ENCODE measurements at regions of chr11 and their contacts with region 1.

Region 1: GRCh38 chr11:112074026-112074811 is at the start of gene NKAPD1:
- DNase-seq: peak; percentile 63 to 82
- ATAC-seq: peak; percentile 86 to 96 (median 94)
- H3K4me3 ChIP-seq: peak within 1 kb of the TSS; percentile 68 to 93 (median 83)
- H3K27ac ChIP-seq: peak within 1 kb of the TSS; percentile 81 to 95 (median 90)
- H3K4me1 ChIP-seq: peaks cover 0 to 35% (median 20%) of the 10 kb centered on the region in 9 donors
- H3K27me3 ChIP-seq: no peaks in the 10 kb centered on the region
- CTCF ChIP-seq: peak in 2 of 9 donors; percentile 13 to 21
- total RNA-seq, gene NKAPD1: 5.8 to 10.5 (median 8.0) TPM

Region 2: DNA sequence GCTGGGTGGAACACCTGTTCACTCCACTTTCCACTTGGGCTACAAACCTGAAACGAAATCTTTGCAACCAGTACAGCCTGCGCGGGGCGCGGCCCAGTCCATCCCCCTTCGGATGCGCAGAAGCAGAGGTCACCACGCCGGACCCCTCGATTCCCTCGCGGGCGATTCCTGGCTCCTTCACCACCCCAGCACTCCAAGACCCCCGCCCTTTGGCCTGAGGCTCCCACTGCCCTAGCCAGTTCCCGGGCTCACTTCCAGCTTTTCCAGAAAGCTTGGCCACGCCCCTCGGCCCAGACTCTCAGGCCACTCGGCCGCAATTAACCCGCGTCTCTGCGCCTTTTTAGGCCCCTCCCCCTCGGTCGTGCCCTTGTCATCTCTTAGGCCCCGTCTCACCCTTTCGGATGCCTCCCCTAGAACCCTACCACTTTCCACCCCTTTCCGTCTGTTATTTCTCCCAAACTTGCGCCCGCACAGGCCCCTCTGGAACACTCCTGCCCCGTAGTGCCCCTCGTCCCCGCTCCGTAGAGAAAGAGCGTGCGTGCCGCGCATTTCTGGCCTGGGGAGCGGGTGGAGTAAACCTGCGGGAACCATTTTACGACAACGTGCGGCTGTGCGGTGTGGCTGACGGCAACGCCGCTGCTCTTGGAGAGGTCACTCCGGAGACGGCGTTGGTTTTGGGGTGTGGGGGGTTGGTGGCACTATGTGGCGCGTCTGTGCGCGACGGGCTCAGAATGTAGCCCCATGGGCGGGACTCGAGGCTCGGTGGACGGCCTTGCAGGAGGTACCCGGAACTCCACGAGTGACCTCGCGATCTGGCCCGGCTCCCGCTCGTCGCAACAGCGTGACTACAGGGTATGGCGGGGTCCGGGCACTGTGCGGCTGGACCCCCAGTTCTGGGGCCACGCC is 49.2 kb before region 1 on chr11 and contains the start of gene DLAT:
- intact Hi-C with region 1: loop called in 1 of 10 experiments (anchors 5 kb)
- DNase-seq: peak; percentile 88 to 89
- ATAC-seq: peak; percentile 93 to 96 (median 94)
- H3K4me3 ChIP-seq: peak within 1 kb of the TSS; percentile 49 to 99 (median 84)
- H3K27ac ChIP-seq: peak within 1 kb of the TSS; percentile 88 to 96 (median 93)
- H3K4me1 ChIP-seq: peaks cover 0 to 50% (median 18%) of the 10 kb centered on the region in 9 donors
- H3K27me3 ChIP-seq: no peaks in the 10 kb centered on the region
- CTCF ChIP-seq: no peak
- total RNA-seq, gene DLAT: 128 to 191 (median 171) TPM

Region 3: GRCh38 chr11:112050721-112051120 is 23.5 kb before region 1 on chr11:
- intact Hi-C with region 1: no loop called
- DNase-seq: no peak
- ATAC-seq: no peak
- H3K4me3 ChIP-seq: no peak overlapping the region
- H3K27ac ChIP-seq: no peak overlapping the region
- H3K4me1 ChIP-seq: peaks cover 0 to 12% (median 0%) of the 10 kb centered on the region in 9 donors
- H3K27me3 ChIP-seq: no peaks in the 10 kb centered on the region
- CTCF ChIP-seq: no peak

Region 4: DNA sequence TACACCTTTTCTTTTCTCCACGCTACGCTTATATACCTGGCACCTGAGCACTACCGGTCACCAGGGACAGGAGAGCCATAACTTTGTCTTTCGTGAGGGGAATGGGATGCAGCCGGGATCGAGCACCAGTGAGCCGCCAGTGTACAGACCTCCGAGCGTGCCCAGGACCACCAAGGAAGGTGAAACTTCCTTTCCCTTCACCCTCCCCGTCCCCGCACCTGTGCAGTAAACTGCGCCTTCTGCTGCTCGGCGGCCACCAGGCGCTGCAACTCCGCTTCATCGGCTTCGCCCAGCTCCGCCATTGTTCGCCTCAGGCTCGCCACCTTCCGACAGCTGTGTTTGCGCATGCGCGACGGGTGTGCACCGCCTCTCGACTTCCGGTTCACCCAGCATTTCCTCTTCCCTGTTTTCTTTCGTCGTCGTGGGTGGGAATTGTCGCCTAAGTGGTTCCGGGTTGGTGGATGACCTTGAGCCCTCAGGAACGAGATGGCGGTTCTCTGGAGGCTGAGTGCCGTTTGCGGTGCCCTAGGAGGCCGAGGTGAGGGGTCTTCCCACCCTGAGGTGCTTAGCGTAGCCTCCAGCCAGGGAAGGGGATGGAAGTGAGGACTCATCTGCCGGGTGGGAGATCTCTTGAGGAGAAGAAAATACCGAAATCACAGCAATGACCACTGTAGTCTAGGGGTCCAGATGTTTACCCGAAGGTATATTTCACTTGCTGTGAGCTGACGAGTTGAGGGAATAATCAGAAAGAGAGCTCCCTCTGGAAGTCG is 12.4 kb after region 1 on chr11 and contains the starts of genes SDHD and TIMM8B:
- intact Hi-C with region 1: loop called in 1 of 10 experiments (anchors 1 kb)
- DNase-seq: peak; percentile 95 to 97
- ATAC-seq: peak; percentile 92 to 98 (median 96)
- H3K4me3 ChIP-seq: peak within 1 kb of the TSS; percentile 71 to 94 (median 84)
- H3K27ac ChIP-seq: peak within 1 kb of the TSS; percentile 69 to 95 (median 88)
- H3K4me1 ChIP-seq: peaks cover 3 to 68% (median 36%) of the 10 kb centered on the region in 9 donors
- H3K27me3 ChIP-seq: no peaks in the 10 kb centered on the region
- CTCF ChIP-seq: peak in 5 of 9 donors; percentile 18 to 50 (median 46)
- total RNA-seq, gene SDHD: 205 to 330 (median 279) TPM
- total RNA-seq, gene TIMM8B: 142 to 194 (median 168) TPM